Activated CD8-positive, alpha-beta memory T cell treated with anti-CD3 and anti-CD28 coated beads, Interleukin-2, amount 10 ng/mL, durations not matched to agents 7 days and 5 days (primary cell): ENCODE measurements at regions of chr14 and their contacts with region 1.

Region 1: GRCh38 chr14:66359500-66359899 is 126.7 kb upstream of the CCDC196 start:
- DNase-seq: no peak
- ATAC-seq: no peak
- H3K4me3 Mint-ChIP-seq: no peak overlapping the region
- H3K27ac Mint-ChIP-seq: no peak overlapping the region
- H3K4me1 Mint-ChIP-seq: no peaks in the 10 kb centered on the region
- H3K27me3 Mint-ChIP-seq: peaks cover 13% of the 10 kb centered on the region

Region 2: GRCh38 chr14:66315548-66315947 is 44.0 kb before region 1 on chr14:
- CTCF ChIA-PET with region 1: no interaction called
- DNase-seq: no peak
- ATAC-seq: no peak
- H3K4me3 Mint-ChIP-seq: no peak overlapping the region
- H3K27ac Mint-ChIP-seq: no peak overlapping the region
- H3K4me1 Mint-ChIP-seq: no peaks in the 10 kb centered on the region
- H3K27me3 Mint-ChIP-seq: no peaks in the 10 kb centered on the region

Region 3: GRCh38 chr14:66378712-66379505 is 19.4 kb after region 1 on chr14:
- CTCF ChIA-PET with region 1: interaction called, 10 read pairs
- DNase-seq: no peak
- ATAC-seq: no peak
- H3K4me3 Mint-ChIP-seq: no peak overlapping the region
- H3K27ac Mint-ChIP-seq: no peak overlapping the region
- H3K4me1 Mint-ChIP-seq: no peaks in the 10 kb centered on the region
- H3K27me3 Mint-ChIP-seq: peaks cover 7% of the 10 kb centered on the region

Region 4: DNA sequence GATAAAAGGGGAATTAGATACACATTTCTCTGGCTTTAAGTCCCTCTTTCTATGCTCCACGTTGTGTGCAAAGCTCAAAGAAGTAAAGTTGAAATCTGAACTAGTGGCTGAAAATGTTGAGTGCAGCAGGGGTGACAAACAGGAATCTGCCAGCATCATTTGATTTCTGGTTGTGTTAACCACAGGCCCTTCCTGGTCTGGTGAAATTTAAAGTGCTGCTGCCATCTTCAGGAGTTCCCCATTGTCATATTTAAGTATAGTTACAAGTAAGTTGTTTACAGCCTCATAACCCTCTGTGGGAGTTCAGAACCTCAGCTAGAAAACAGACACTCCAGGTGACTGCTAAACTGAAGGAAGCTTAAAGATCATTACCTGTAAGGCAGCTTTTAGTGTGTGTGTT is 35.8 kb after region 1 on chr14:
- CTCF ChIA-PET with region 1: interaction called, 26 read pairs
- DNase-seq: peak; percentile 52
- ATAC-seq: peak; percentile 60
- H3K4me3 Mint-ChIP-seq: no peak overlapping the region
- H3K27ac Mint-ChIP-seq: no peak overlapping the region
- H3K4me1 Mint-ChIP-seq: peaks cover 7% of the 10 kb centered on the region
- H3K27me3 Mint-ChIP-seq: peaks cover 10% of the 10 kb centered on the region

Region 5: DNA sequence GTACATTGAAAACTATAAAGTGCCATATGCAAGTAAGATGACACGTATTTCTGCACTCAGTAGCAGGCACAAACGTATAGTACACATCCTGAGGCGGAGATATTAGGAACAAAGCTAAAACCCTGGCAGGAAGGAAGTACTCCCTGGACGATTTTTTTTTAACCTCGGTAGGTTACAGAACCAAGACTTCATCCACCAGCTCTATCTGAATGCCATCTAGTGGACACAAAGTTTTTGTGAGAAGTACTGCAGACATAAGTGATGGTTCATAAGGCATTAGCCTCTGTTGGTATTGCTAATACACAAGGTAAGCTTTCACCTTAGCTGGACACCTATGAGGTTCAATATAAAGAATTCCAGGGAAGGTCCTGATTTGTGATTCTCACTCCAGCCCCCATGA is 43.7 kb after region 1 on chr14:
- CTCF ChIA-PET with region 1: interaction called, 12 read pairs
- DNase-seq: no peak
- ATAC-seq: no peak
- H3K4me3 Mint-ChIP-seq: no peak overlapping the region
- H3K27ac Mint-ChIP-seq: no peak overlapping the region
- H3K4me1 Mint-ChIP-seq: peaks cover 2% of the 10 kb centered on the region
- H3K27me3 Mint-ChIP-seq: no peaks in the 10 kb centered on the region